ENCODE measurements at regions of chr5 and their contacts with region 1.

Region 1: GRCh38 chr5:36414869-36415282 is 113.2 kb upstream of the RANBP3L start:
- DNase-seq: no peak
- H3K4me3 ChIP-seq: no peak overlapping the region
- H3K27ac ChIP-seq: no peak overlapping the region
- H3K4me1 ChIP-seq: peaks cover 0 to 10% (median 3%) of the 10 kb centered on the region in 4 donors
- H3K27me3 ChIP-seq: no peaks in the 10 kb centered on the region
- CTCF ChIP-seq: peak; percentile 20 to 47 (median 43)
- EP300 ChIP-seq: no peak
- POLR2A ChIP-seq: no peak

Region 2: GRCh38 chr5:36507332-36507952 is 92.6 kb after region 1 on chr5:
- intact Hi-C with region 1: loop called (anchors 1 kb)
- DNase-seq: peak; percentile 88
- H3K4me3 ChIP-seq: no peak overlapping the region
- H3K27ac ChIP-seq: no peak overlapping the region
- H3K4me1 ChIP-seq: peaks cover 0 to 10% (median 0%) of the 10 kb centered on the region in 4 donors
- H3K27me3 ChIP-seq: no peaks in the 10 kb centered on the region
- CTCF ChIP-seq: peak; percentile 71 to 82 (median 76)
- EP300 ChIP-seq: no peak
- POLR2A ChIP-seq: no peak